ENCODE measurements at regions of chr3 and their contacts with region 1.

Region 1: DNA sequence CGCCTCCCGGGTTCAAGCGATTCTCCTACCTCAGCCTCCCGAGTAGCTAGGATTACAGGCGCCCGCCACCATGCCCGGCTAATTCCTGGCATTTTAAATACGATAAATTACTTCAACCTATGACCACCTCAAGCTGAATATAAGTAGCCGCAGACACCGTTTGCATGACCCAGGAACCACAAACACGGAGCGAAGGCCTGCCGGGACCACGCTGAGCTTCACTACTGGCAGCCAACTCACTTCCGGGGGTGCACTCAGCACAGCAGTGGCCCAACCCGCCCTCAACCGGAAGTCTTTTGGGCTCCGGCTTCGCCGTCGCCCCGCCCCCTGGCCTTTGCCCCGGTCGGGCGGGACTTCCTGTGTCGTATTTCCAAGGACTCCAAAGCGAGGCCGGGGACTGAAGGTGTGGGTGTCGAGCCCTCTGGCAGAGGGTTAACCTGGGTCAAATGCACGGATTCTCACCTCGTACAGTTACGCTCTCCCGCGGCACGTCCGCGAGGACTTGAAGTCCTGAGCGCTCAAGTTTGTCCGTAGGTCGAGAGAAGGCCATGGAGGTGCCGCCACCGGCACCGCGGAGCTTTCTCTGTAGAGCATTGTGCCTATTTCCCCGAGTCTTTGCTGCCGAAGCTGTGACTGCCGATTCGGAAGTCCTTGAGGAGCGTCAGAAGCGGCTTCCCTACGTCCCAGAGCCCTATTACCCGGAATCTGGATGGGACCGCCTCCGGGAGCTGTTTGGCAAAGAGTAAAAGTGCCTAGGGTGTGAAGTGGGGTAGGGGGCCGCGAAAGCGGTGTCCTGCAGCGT is at the start of gene TIMMDC1:
- DNase-seq: peak; percentile 94 to 99 (median 96)
- ATAC-seq: peak; percentile 97
- H3K4me3 ChIP-seq: peak within 1 kb of the TSS; percentile 95
- H3K4me3 Mint-ChIP-seq: peak within 1 kb of the TSS; percentile 99
- H3K27ac ChIP-seq: peak within 1 kb of the TSS; percentile 90 to 93
- H3K27ac Mint-ChIP-seq: peak within 1 kb of the TSS; percentile 99
- H3K4me1 ChIP-seq: peaks cover 20% of the 10 kb centered on the region
- H3K4me1 Mint-ChIP-seq: peaks cover 42% of the 10 kb centered on the region
- H3K27me3 ChIP-seq: no peaks in the 10 kb centered on the region
- H3K27me3 Mint-ChIP-seq: no peaks in the 10 kb centered on the region
- CTCF ChIP-seq: no peak
- total RNA-seq, gene TIMMDC1: 14.4 to 18.3 TPM

Region 2: DNA sequence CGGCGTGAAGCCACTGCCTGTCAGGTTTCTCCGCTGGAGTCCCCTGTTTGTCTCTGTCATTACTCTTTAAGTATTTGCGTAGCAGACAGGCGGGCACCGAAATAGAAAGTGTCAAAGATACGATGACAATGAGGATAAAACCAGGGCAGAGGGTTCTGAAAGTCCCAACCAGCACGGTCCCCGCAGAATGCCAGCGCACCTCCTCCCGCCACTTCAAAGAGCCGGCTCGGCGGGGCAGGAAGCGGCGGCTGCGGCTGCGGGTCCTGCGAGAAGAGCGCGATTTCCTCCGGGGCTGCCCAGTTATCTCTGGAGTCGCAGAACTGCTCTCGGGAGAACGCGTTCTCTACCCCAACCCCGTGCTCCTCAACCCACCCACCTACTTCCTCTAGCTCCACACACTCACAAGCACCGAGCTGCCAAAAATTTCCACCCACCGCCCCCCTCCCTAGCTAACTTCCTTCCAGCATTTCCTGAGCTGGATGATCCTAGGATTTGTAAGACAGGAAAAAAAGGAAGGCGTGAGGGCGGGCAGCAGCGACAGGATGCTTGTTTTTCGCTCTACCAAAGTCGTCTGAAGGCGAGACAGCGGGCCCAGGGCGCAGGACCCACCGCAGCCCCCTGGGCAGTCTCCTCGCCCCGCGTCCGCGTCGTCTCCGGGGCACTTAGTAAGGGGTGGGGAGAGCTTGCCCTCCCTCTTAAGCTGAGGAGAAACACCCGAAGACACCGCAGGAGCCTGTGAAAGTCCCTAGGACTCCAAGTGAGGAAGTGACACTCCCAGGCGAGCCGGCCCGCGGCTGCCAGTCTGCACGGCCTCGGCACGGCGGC is 204.3 kb before region 1 on chr3 and contains the start of gene ARHGAP31:
- CTCF ChIA-PET with region 1: no interaction called
- POLR2A ChIA-PET with region 1: interaction called, 12 read pairs
- intact Hi-C with region 1: no loop called
- DNase-seq: peak; percentile 60 to 96 (median 78)
- ATAC-seq: peak; percentile 68
- H3K4me3 ChIP-seq: peak within 1 kb of the TSS; percentile 84
- H3K4me3 Mint-ChIP-seq: peak within 1 kb of the TSS; percentile 84
- H3K27ac ChIP-seq: peak within 1 kb of the TSS; percentile 95 to 96
- H3K27ac Mint-ChIP-seq: peak within 1 kb of the TSS; percentile 100
- H3K4me1 ChIP-seq: peaks cover 65% of the 10 kb centered on the region
- H3K4me1 Mint-ChIP-seq: peaks cover 74% of the 10 kb centered on the region
- H3K27me3 ChIP-seq: no peaks in the 10 kb centered on the region
- H3K27me3 Mint-ChIP-seq: no peaks in the 10 kb centered on the region
- CTCF ChIP-seq: no peak
- total RNA-seq, gene ARHGAP31: 2.4 to 2.9 TPM

Region 3: GRCh38 chr3:119322835-119323722 is 175.3 kb before region 1 on chr3:
- CTCF ChIA-PET with region 1: no interaction called
- POLR2A ChIA-PET with region 1: interaction called, 4 read pairs
- intact Hi-C with region 1: loop called in 1 of 2 experiments (anchors 1 kb)
- DNase-seq: peak; percentile 70 to 97 (median 84)
- ATAC-seq: peak; percentile 86
- H3K4me3 ChIP-seq: peak overlapping the region; percentile 79
- H3K4me3 Mint-ChIP-seq: peak overlapping the region; percentile 89
- H3K27ac ChIP-seq: peak overlapping the region; percentile 81 to 90
- H3K27ac Mint-ChIP-seq: peak overlapping the region; percentile 96
- H3K4me1 ChIP-seq: peaks cover 23% of the 10 kb centered on the region
- H3K4me1 Mint-ChIP-seq: peaks cover 32% of the 10 kb centered on the region
- H3K27me3 ChIP-seq: no peaks in the 10 kb centered on the region
- H3K27me3 Mint-ChIP-seq: no peaks in the 10 kb centered on the region
- CTCF ChIP-seq: no peak

Region 4: GRCh38 chr3:119469381-119470189 is 28.8 kb before region 1 on chr3:
- CTCF ChIA-PET with region 1: interaction called, 7 read pairs
- POLR2A ChIA-PET with region 1: interaction called, 85 read pairs
- intact Hi-C with region 1: loop called (anchors 1 kb)
- DNase-seq: peak in 3 of 14 experiments; percentile 21 to 32 (median 27)
- ATAC-seq: peak; percentile 20
- H3K4me3 ChIP-seq: peak overlapping the region; percentile 86
- H3K4me3 Mint-ChIP-seq: peak overlapping the region; percentile 98
- H3K27ac ChIP-seq: peak overlapping the region; percentile 37 to 81
- H3K27ac Mint-ChIP-seq: peak overlapping the region; percentile 90
- H3K4me1 ChIP-seq: peaks cover 28% of the 10 kb centered on the region
- H3K4me1 Mint-ChIP-seq: peaks cover 29% of the 10 kb centered on the region
- H3K27me3 ChIP-seq: no peaks in the 10 kb centered on the region
- H3K27me3 Mint-ChIP-seq: no peaks in the 10 kb centered on the region
- CTCF ChIP-seq: no peak

Region 5: DNA sequence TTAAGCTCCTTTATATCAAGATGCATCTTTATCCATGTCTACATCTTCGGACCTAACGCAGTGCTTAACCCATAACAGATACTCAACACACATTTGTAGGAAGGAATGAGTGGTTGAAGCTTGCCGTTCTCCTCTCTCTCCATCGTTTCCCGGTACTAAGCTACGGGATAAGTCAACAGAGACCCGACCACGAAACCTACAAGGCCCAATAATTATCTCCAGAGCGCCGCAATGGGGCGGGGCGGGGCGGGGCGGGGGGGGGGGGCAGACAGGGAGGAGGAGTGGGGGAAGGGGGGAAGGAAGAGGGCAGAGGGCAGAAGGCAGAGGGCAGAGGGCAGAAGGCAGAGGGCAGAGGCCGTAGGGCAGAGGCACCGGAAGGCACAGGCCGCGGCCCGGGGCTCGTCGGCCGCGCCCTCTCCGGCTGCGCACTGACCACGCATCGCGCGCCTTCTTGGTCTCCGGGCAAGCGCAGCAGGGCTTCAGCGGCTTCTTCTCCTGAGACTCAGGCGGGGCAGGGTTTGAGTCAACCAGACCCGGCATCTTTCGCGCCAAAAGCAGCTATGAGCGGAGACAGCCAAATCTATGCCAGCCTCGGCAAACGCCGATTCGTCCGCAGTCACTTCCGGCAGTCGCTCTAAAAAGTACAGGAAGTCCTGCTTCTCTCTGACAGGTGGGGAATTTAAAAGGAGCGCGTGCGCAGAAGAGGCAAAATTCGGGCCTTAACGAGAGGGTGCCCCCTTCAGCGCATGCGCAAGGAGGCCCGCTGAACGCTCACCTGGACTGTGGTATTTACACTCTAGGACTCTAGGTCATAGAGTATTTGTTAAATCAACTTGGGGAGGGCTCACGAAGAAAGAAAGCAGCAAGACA is 178.6 kb after region 1 on chr3 and contains the start of gene COX17:
- CTCF ChIA-PET with region 1: no interaction called
- POLR2A ChIA-PET with region 1: interaction called, 13 read pairs
- intact Hi-C with region 1: loop called (anchors 1 to 2 kb)
- DNase-seq: peak; percentile 92 to 99 (median 95)
- ATAC-seq: peak; percentile 87
- H3K4me3 ChIP-seq: peak within 1 kb of the TSS; percentile 68
- H3K4me3 Mint-ChIP-seq: peak within 1 kb of the TSS; percentile 87
- H3K27ac ChIP-seq: peak within 1 kb of the TSS; percentile 81 to 85
- H3K27ac Mint-ChIP-seq: peak within 1 kb of the TSS; percentile 91
- H3K4me1 ChIP-seq: peaks cover 8% of the 10 kb centered on the region
- H3K4me1 Mint-ChIP-seq: peaks cover 36% of the 10 kb centered on the region
- H3K27me3 ChIP-seq: no peaks in the 10 kb centered on the region
- H3K27me3 Mint-ChIP-seq: no peaks in the 10 kb centered on the region
- CTCF ChIP-seq: no peak
- total RNA-seq, gene COX17: 24.6 to 26.3 TPM

Region 6: DNA sequence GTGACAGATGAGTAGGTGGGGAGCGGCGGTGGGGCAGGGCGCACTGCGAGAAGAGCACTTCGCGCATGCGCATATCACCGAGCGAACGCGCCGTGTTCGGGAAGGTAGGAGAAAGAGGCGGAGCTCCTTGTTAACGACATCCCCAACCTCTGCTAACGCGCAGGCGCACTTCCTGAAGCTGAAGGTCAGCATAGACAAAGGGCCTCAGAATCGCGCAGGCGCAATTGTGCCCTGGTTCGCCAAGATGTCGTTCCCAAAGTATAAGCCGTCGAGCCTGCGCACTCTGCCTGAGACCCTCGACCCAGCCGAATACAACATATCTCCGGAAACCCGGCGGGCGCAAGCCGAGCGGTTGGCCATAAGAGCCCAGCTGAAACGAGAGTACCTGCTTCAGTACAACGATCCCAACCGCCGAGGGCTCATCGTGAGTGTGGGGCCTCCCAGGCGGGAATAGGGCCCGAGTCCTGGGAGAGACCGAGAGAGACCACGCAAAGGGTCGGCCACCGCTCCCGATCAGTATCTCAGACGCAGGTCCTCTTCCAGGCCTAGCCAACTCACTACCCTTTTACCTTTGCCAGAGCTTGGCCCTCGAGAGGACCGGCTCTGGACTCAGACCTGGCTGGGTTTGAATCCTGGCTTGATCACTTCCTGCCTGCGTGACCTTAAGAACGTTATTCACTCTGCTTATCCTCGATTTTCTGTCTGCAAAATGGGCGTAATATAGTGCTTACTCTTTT is 1097.9 kb after region 1 on chr3 and contains the start of gene NDUFB4:
- CTCF ChIA-PET with region 1: no interaction called
- POLR2A ChIA-PET with region 1: interaction called, 4 read pairs
- intact Hi-C with region 1: loop called in 1 of 2 experiments (anchors 10 kb)
- DNase-seq: peak; percentile 87 to 99 (median 94)
- ATAC-seq: peak; percentile 87
- H3K4me3 ChIP-seq: peak within 1 kb of the TSS; percentile 88
- H3K4me3 Mint-ChIP-seq: peak within 1 kb of the TSS; percentile 98
- H3K27ac ChIP-seq: peak within 1 kb of the TSS; percentile 94 to 95
- H3K27ac Mint-ChIP-seq: no peak within 1 kb of the TSS
- H3K4me1 ChIP-seq: peaks cover 14% of the 10 kb centered on the region
- H3K4me1 Mint-ChIP-seq: peaks cover 8% of the 10 kb centered on the region
- H3K27me3 ChIP-seq: no peaks in the 10 kb centered on the region
- H3K27me3 Mint-ChIP-seq: no peaks in the 10 kb centered on the region
- CTCF ChIP-seq: no peak
- total RNA-seq, gene NDUFB4: 81.3 to 84.0 TPM

Measured in CD4-positive, alpha-beta T cell (primary cell).